CD4-positive, alpha-beta T cell (primary cell): ENCODE measurements at regions of chr3 and their contacts with region 1.

Region 1: GRCh38 chr3:113495035-113495434 is 19.9 kb downstream of the SPICE1 start:
- DNase-seq: peak in 12 of 14 experiments; percentile 10 to 68 (median 32)
- ATAC-seq: peak; percentile 66
- H3K4me3 ChIP-seq: no peak overlapping the region
- H3K4me3 Mint-ChIP-seq: no peak overlapping the region
- H3K27ac ChIP-seq: no peak overlapping the region
- H3K27ac Mint-ChIP-seq: no peak overlapping the region
- H3K4me1 ChIP-seq: no peaks in the 10 kb centered on the region
- H3K4me1 Mint-ChIP-seq: peaks cover 4% of the 10 kb centered on the region
- H3K27me3 ChIP-seq: no peaks in the 10 kb centered on the region
- H3K27me3 Mint-ChIP-seq: no peaks in the 10 kb centered on the region
- CTCF ChIP-seq: peak; percentile 45

Region 2: DNA sequence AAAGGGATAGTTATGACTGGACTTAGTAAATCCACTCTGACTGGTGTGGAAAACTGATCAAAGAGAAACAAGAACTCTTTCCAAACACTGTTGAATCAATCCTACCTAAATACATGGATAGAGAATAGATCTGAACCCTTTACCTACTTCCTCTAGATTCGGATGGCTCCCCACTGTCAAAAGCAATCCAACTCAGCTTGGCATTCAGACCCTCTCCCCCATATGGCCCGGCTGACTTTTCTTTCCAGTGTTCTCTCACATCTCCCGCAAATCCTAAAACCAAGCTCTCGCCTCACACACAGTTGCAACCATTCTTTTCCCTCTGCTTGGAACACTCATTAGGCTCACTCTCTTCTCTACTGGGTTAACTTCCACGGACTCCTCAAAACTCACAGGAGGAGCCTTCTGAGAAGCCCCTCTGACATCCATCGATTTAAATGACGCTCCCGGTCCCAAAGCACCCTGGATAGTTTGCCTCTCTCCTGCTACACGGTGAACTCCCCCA is 19.3 kb after region 1 on chr3:
- CTCF ChIA-PET with region 1: interaction called, 10 read pairs
- POLR2A ChIA-PET with region 1: interaction called, 26 read pairs
- intact Hi-C with region 1: loop called in 1 of 2 experiments (anchors 2 kb)
- DNase-seq: peak in 1 of 14 experiments; percentile 6
- ATAC-seq: peak; percentile 0
- H3K4me3 ChIP-seq: peak overlapping the region; percentile 82
- H3K4me3 Mint-ChIP-seq: no peak overlapping the region
- H3K27ac ChIP-seq: peak overlapping the region; percentile 87 to 93
- H3K27ac Mint-ChIP-seq: no peak overlapping the region
- H3K4me1 ChIP-seq: peaks cover 18% of the 10 kb centered on the region
- H3K4me1 Mint-ChIP-seq: peaks cover 7% of the 10 kb centered on the region
- H3K27me3 ChIP-seq: no peaks in the 10 kb centered on the region
- H3K27me3 Mint-ChIP-seq: peaks cover 16% of the 10 kb centered on the region
- CTCF ChIP-seq: no peak

Region 3: GRCh38 chr3:113552851-113553250 is 57.8 kb after region 1 on chr3:
- CTCF ChIA-PET with region 1: interaction called, 13 read pairs
- POLR2A ChIA-PET with region 1: interaction called, 5 read pairs
- intact Hi-C with region 1: loop called (anchors 1 to 2 kb)
- DNase-seq: peak in 11 of 14 experiments; percentile 7 to 70 (median 35)
- ATAC-seq: peak; percentile 89
- H3K4me3 ChIP-seq: no peak overlapping the region
- H3K4me3 Mint-ChIP-seq: no peak overlapping the region
- H3K27ac ChIP-seq: no peak overlapping the region
- H3K27ac Mint-ChIP-seq: no peak overlapping the region
- H3K4me1 ChIP-seq: peaks cover 3% of the 10 kb centered on the region
- H3K4me1 Mint-ChIP-seq: peaks cover 60% of the 10 kb centered on the region
- H3K27me3 ChIP-seq: no peaks in the 10 kb centered on the region
- H3K27me3 Mint-ChIP-seq: no peaks in the 10 kb centered on the region
- CTCF ChIP-seq: peak; percentile 38

Region 4: GRCh38 chr3:113575206-113575605 is 80.2 kb after region 1 on chr3:
- CTCF ChIA-PET with region 1: interaction called, 34 read pairs
- POLR2A ChIA-PET with region 1: interaction called, 6 read pairs
- intact Hi-C with region 1: loop called (anchors 1 kb)
- DNase-seq: no peak
- ATAC-seq: no peak
- H3K4me3 ChIP-seq: no peak overlapping the region
- H3K4me3 Mint-ChIP-seq: no peak overlapping the region
- H3K27ac ChIP-seq: no peak overlapping the region
- H3K27ac Mint-ChIP-seq: peak overlapping the region; percentile 27
- H3K4me1 ChIP-seq: no peaks in the 10 kb centered on the region
- H3K4me1 Mint-ChIP-seq: peaks cover 5% of the 10 kb centered on the region
- H3K27me3 ChIP-seq: no peaks in the 10 kb centered on the region
- H3K27me3 Mint-ChIP-seq: no peaks in the 10 kb centered on the region
- CTCF ChIP-seq: no peak

Region 5: GRCh38 chr3:113947372-113948014 is 452.5 kb after region 1 on chr3 and contains the start of gene ZDHHC23:
- CTCF ChIA-PET with region 1: no interaction called
- POLR2A ChIA-PET with region 1: no interaction called
- intact Hi-C with region 1: loop called in 1 of 2 experiments (anchors 10 kb)
- DNase-seq: peak; percentile 25 to 90 (median 54)
- ATAC-seq: peak; percentile 89
- H3K4me3 ChIP-seq: peak within 1 kb of the TSS; percentile 84
- H3K4me3 Mint-ChIP-seq: peak within 1 kb of the TSS; percentile 91
- H3K27ac ChIP-seq: no peak within 1 kb of the TSS
- H3K27ac Mint-ChIP-seq: peak within 1 kb of the TSS; percentile 25
- H3K4me1 ChIP-seq: peaks cover 15% of the 10 kb centered on the region
- H3K4me1 Mint-ChIP-seq: peaks cover 18% of the 10 kb centered on the region
- H3K27me3 ChIP-seq: peaks cover 0 to 3% of the 10 kb centered on the region in 2 experiments
- H3K27me3 Mint-ChIP-seq: peaks cover 13% of the 10 kb centered on the region
- CTCF ChIP-seq: no peak
- total RNA-seq, gene ZDHHC23: 3.2 TPM